ENCODE measurements at regions of chr12 and their contacts with region 1.

Region 1: GRCh38 chr12:106962286-106962685 is 6.6 kb downstream of the TMEM263 start:
- DNase-seq: no peak
- H3K4me3 ChIP-seq: no peak overlapping the region
- H3K27ac ChIP-seq: no peak overlapping the region
- H3K27me3 ChIP-seq: no peaks in the 10 kb centered on the region
- CTCF ChIP-seq: no peak

Region 2: GRCh38 chr12:106871496-106871895 is 90.8 kb before region 1 on chr12:
- intact Hi-C with region 1: no loop called
- DNase-seq: no peak
- H3K4me3 ChIP-seq: no peak overlapping the region
- H3K27ac ChIP-seq: no peak overlapping the region
- H3K27me3 ChIP-seq: no peaks in the 10 kb centered on the region
- CTCF ChIP-seq: no peak

Region 3: GRCh38 chr12:106892075-106892474 is 70.2 kb before region 1 on chr12:
- intact Hi-C with region 1: no loop called
- DNase-seq: no peak
- H3K4me3 ChIP-seq: no peak overlapping the region
- H3K27ac ChIP-seq: no peak overlapping the region
- H3K27me3 ChIP-seq: no peaks in the 10 kb centered on the region
- CTCF ChIP-seq: no peak

Region 4: DNA sequence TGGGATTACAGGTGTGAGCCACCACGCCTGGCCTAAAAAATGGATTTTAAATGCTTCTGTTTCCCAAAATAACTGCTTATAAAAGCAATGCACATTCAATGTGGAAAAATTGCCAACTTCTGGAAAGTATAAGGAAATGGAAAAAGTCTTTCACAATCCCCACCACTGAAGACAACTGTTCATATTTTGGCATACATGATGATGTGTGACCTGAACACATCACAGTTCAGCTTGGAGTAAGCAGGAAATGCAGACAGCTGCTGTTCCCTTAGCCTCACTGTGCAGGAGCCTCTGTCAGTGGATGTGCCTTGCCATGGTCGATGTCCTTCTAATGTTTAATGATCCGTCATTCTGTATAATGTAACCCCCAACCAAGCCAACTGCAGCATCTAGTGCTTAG is 19.5 kb after region 1 on chr12:
- intact Hi-C with region 1: loop called (anchors 1 to 2 kb)
- DNase-seq: no peak
- H3K4me3 ChIP-seq: no peak overlapping the region
- H3K27ac ChIP-seq: no peak overlapping the region
- H3K27me3 ChIP-seq: no peaks in the 10 kb centered on the region
- CTCF ChIP-seq: no peak

Region 5: DNA sequence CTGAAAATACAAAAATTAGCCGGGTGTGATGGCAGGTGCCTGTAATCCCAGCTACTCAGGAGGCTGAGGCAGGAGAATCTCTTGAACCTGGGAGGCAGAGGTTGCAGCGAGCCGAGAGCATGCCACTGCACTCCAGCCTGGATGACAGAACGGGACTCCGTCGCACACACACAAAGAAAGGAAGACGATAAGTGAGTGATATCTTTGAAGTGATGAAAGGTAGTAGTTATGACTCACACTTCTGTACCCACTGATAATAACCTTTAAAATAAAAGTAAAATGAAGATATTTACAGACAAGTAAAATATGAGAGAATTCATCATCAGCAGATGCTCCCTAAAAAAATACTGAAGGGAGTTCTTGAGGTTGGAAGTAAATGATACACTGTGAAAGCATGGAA is 302.4 kb after region 1 on chr12:
- intact Hi-C with region 1: no loop called
- DNase-seq: no peak
- H3K4me3 ChIP-seq: no peak overlapping the region
- H3K27ac ChIP-seq: no peak overlapping the region
- H3K27me3 ChIP-seq: peaks cover 0 to 4% (median 0%) of the 10 kb centered on the region in 45 donors
- CTCF ChIP-seq: no peak

Region 6: DNA sequence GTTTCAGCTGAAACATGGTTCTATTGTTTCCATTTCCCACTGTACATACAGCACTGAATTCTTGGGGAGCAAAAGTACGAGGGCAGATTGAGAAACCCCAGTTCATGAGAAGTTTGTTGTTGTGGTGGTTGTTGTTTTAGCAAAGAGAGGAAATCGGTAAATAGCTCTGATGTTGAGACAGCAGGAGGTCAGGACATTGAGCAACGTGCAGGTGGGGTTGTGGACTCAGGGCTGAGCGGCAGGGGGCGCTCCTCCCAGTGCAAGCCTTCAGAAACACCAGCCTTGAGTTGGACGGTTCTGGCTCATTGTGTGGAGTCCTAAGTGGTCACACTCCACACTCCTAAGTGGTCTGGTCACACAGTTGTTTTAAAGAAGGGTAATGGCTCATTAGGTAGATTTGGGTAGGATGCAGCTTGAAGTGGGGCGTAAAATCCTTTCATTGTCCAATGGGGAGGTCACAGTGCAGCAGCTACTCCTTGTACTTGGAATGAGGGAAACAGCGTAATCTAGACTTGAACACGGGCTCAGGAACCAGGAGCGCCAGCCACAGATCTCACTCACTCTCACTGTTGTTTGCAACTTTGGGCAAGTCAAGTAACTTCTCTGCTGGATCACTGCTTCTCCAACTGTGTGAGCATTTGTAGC is 708.8 kb after region 1 on chr12:
- intact Hi-C with region 1: loop called in 1 of 2 experiments (anchors 10 kb)
- DNase-seq: no peak
- H3K4me3 ChIP-seq: no peak overlapping the region
- H3K27ac ChIP-seq: peak overlapping the region in 1 of 59 donors; percentile 10
- H3K27me3 ChIP-seq: peaks cover 0 to 22% (median 0%) of the 10 kb centered on the region in 45 donors
- CTCF ChIP-seq: peak in 47 of 56 donors; percentile 10 to 51 (median 41)

Measured in dorsolateral prefrontal cortex (tissue), 120 donors.